Caco-2 (cell line): ENCODE measurements at regions of chr4 and their contacts with region 1.

Region 1: GRCh38 chr4:122758033-122758432 is 25.5 kb downstream of the BBS12 start:
- DNase-seq: peak in 1 of 2 experiments; percentile 21
- H3K4me3 ChIP-seq: no peak overlapping the region
- H3K4me3 Mint-ChIP-seq: peak overlapping the region; percentile 23
- H3K27ac Mint-ChIP-seq: no peak overlapping the region
- H3K4me1 ChIP-seq: 0 out of 2 replicates have a peak, but pooled peaks cover 9% of the 10 kb centered on the region
- H3K4me1 Mint-ChIP-seq: peaks cover 8% of the 10 kb centered on the region
- H3K27me3 ChIP-seq: no peaks in the 10 kb centered on the region
- H3K27me3 Mint-ChIP-seq: no peaks in the 10 kb centered on the region
- CTCF ChIP-seq: peak; percentile 56 to 57

Region 2: GRCh38 chr4:122914292-122914904 is 156.4 kb after region 1 on chr4:
- CTCF ChIA-PET with region 1: interaction called, 6 read pairs
- POLR2A ChIA-PET with region 1: no interaction called
- intact Hi-C with region 1: loop called (anchors 1 kb)
- DNase-seq: peak in 1 of 2 experiments; percentile 4
- H3K4me3 ChIP-seq: no peak overlapping the region
- H3K4me3 Mint-ChIP-seq: no peak overlapping the region
- H3K27ac Mint-ChIP-seq: no peak overlapping the region
- H3K4me1 ChIP-seq: no peaks in the 10 kb centered on the region
- H3K4me1 Mint-ChIP-seq: no peaks in the 10 kb centered on the region
- H3K27me3 ChIP-seq: no peaks in the 10 kb centered on the region
- H3K27me3 Mint-ChIP-seq: no peaks in the 10 kb centered on the region
- CTCF ChIP-seq: no peak

Region 3: DNA sequence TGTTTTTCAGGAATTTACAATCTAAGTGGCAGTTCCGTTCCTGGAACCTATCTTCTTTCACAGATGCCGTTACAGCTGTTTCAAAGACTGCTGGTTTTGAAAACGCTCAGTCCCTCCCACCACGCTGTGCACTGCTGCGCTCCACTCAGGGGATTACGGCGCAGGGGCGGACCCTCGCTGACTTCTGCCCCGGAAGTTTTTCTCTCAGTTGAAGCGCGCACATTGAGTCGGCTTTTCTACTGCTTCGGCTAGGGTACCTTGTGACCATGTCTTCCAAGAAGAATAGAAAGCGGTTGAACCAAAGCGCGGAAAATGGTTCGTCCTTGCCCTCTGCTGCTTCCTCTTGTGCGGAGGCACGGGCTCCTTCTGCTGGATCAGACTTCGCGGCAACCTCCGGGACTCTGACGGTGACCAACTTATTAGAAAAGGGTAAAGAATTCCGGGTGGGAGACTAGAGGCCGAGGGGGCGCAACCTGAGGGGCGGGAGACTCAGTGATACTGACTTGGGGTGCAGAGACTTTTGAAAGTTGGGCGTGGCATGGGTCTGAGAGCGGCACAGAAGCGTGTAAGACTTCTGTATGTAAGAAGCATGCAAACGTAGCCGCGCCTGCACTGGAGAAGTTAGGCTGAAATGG is 165.0 kb after region 1 on chr4:
- CTCF ChIA-PET with region 1: interaction called, 11 read pairs
- POLR2A ChIA-PET with region 1: no interaction called
- intact Hi-C with region 1: loop called (anchors 2 kb)
- DNase-seq: peak; percentile 80 to 81
- H3K4me3 ChIP-seq: peak overlapping the region; percentile 66
- H3K4me3 Mint-ChIP-seq: no peak overlapping the region
- H3K27ac Mint-ChIP-seq: peak overlapping the region; percentile 79
- H3K4me1 ChIP-seq: no peaks in the 10 kb centered on the region
- H3K4me1 Mint-ChIP-seq: no peaks in the 10 kb centered on the region
- H3K27me3 ChIP-seq: no peaks in the 10 kb centered on the region
- H3K27me3 Mint-ChIP-seq: no peaks in the 10 kb centered on the region
- CTCF ChIP-seq: no peak

Region 4: GRCh38 chr4:122930862-122931261 is 172.8 kb after region 1 on chr4:
- CTCF ChIA-PET with region 1: no interaction called
- POLR2A ChIA-PET with region 1: no interaction called
- intact Hi-C with region 1: loop called (anchors 1 kb)
- DNase-seq: no peak
- H3K4me3 ChIP-seq: no peak overlapping the region
- H3K4me3 Mint-ChIP-seq: no peak overlapping the region
- H3K27ac Mint-ChIP-seq: no peak overlapping the region
- H3K4me1 ChIP-seq: no peaks in the 10 kb centered on the region
- H3K4me1 Mint-ChIP-seq: no peaks in the 10 kb centered on the region
- H3K27me3 ChIP-seq: no peaks in the 10 kb centered on the region
- H3K27me3 Mint-ChIP-seq: no peaks in the 10 kb centered on the region
- CTCF ChIP-seq: no peak